ENCODE measurements at regions of chr19 and their contacts with region 1.

Region 1: DNA sequence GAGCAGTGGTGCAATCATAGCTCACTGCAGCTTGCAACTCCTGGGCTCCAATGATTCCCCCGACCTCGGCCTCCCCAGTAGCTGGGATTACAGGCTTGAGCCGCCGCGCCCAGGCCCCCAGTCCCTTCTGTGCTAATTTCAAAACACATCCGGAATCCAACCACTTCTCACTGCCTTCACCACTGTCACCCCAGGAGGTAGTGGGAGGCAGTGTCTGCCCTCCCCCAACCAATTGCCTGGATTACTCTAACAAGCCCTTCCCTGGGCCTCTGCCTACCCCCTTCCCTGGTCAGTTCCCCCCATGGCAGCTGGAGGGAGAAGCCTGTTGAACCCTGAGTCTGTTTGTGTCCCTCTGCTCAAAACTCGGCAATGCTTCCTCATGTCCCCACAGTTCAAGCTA is 2.3 kb downstream of the PRAM1 start:
- DNase-seq: no peak
- ATAC-seq: no peak
- H3K4me3 ChIP-seq: no peak overlapping the region
- H3K27ac ChIP-seq: no peak overlapping the region
- H3K4me1 ChIP-seq: no peaks in the 10 kb centered on the region
- H3K27me3 ChIP-seq: no peaks in the 10 kb centered on the region
- CTCF ChIP-seq: no peak

Region 2: DNA sequence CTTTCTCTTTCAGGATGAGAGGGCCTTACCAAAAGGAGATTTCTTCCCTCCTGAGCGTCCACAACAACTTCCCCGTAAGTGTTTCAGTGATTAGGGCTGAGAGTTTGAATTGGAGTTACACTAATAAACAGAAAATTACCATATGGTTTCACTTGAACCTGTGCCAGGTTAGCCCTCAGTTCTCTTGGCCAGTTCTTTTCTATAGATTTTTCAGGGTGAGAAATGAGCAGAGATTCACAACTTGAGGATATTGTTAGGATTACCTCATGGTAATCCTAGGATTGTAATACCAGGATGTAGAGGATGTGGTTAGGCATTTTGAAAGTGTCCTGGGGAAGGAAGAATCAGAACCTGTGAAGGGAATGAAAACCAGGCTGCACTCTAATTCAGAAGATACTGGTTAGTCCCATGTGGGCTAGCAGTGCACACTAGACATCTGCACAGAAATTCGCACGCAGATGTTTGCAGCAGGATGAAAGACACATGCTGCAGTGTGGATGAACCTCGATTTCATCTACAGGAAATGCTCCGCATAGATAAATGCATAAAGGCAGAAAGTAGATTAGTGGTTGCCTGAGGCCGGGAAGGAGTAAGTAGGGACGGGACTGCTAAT is 31.3 kb before region 1 on chr19:
- intact Hi-C with region 1: loop called in 1 of 2 experiments (anchors 5 kb)
- DNase-seq: no peak
- ATAC-seq: no peak
- H3K4me3 ChIP-seq: no peak overlapping the region
- H3K27ac ChIP-seq: no peak overlapping the region
- H3K4me1 ChIP-seq: no peaks in the 10 kb centered on the region
- H3K27me3 ChIP-seq: no peaks in the 10 kb centered on the region
- CTCF ChIP-seq: no peak

Region 3: GRCh38 chr19:8530061-8530679 is 30.0 kb after region 1 on chr19:
- intact Hi-C with region 1: no loop called
- DNase-seq: no peak
- ATAC-seq: no peak
- H3K4me3 ChIP-seq: no peak overlapping the region
- H3K27ac ChIP-seq: no peak overlapping the region
- H3K4me1 ChIP-seq: no peaks in the 10 kb centered on the region
- H3K27me3 ChIP-seq: peaks cover 0 to 4% (median 0%) of the 10 kb centered on the region in 3 donors
- CTCF ChIP-seq: no peak